ENCODE measurements at regions of chr17 and their contacts with region 1.

Region 1: GRCh38 chr17:11144358-11145233 is 96.4 kb upstream of the SHISA6 start:
- DNase-seq: no peak
- ATAC-seq: no peak
- H3K4me3 ChIP-seq: no peak overlapping the region
- H3K27ac ChIP-seq: no peak overlapping the region
- H3K4me1 ChIP-seq: no peaks in the 10 kb centered on the region
- H3K27me3 ChIP-seq: no peaks in the 10 kb centered on the region

Region 2: DNA sequence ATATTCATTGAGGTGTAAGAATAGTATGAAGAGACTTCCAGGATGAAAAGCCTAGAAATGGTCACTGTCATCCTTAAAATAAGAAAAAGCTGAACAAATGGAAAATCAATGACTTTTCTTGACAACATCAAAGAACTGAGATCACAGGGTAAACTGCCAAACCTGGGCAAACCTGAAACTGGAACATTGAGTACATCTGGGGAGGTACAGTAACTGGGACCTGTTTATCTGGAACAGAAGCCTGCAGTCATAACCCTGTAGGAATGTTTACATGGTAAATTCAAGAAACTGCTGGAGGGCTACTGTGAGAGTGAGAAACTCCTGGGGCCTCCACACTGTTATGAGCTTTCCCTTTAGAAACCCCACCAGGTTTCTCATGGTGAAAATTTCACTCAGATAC is 176.6 kb before region 1 on chr17:
- intact Hi-C with region 1: loop called in 1 of 2 experiments (anchors 5 kb)
- DNase-seq: no peak
- ATAC-seq: no peak
- H3K4me3 ChIP-seq: no peak overlapping the region
- H3K27ac ChIP-seq: no peak overlapping the region
- H3K4me1 ChIP-seq: no peaks in the 10 kb centered on the region
- H3K27me3 ChIP-seq: no peaks in the 10 kb centered on the region

Region 3: GRCh38 chr17:10999484-10999883 is 145.1 kb before region 1 on chr17:
- intact Hi-C with region 1: no loop called
- DNase-seq: no peak
- ATAC-seq: no peak
- H3K4me3 ChIP-seq: no peak overlapping the region
- H3K27ac ChIP-seq: no peak overlapping the region
- H3K4me1 ChIP-seq: no peaks in the 10 kb centered on the region
- H3K27me3 ChIP-seq: peaks cover 0 to 1% of the 10 kb centered on the region in 2 donors

Region 4: DNA sequence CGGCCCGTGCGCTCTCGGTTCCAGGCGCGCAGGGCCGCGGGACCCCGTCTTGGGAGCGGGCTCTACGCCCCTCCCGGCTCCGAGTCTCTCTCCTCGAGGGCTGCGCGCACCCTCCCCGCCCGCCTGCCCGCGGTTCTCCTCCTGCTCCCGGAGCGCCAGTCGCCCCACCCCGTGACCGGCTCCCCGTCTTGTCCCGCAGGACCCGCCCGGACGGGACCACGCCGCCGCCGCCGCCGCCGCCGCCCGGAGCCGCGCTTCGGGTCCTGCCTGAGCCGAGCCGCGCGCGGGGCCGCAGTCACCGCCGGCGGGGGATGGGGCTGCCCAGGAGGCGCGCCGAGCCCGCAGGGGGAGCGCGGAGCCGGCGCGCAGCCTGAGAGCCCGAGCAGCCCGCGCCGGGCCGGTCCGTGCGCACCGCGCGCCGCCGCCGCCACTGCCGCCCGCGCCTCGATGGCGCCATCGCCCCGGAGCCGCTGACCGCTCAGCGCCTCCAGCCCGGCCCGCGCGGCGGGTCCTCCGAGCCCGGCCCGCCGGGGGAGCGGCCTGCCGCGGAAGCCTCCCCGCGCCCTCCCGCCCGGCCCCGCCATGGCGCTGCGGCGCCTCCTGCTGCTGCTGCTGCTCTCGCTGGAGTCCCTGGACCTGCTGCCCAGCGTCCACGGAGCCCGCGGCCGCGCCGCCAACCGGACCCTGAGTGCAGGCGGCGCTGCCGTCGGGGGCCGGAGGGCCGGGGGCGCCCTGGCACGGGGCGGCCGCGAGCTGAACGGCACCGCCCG is 96.4 kb after region 1 on chr17 and contains the start of gene SHISA6:
- intact Hi-C with region 1: no loop called
- DNase-seq: no peak
- ATAC-seq: no peak
- H3K4me3 ChIP-seq: peak within 1 kb of the TSS in 1 of 2 donors; percentile 22
- H3K27ac ChIP-seq: no peak within 1 kb of the TSS
- H3K4me1 ChIP-seq: no peaks in the 10 kb centered on the region
- H3K27me3 ChIP-seq: no peaks in the 10 kb centered on the region
- total RNA-seq, gene SHISA6: 0.13 to 0.48 TPM

Measured in aorta (tissue), 5 donors.